ENCODE measurements at regions of chr12 and their contacts with region 1.

Region 1: GRCh38 chr12:95700316-95700785 is 90.2 kb downstream of the NTN4 start:
- DNase-seq: peak; percentile 10 to 91
- H3K4me3 ChIP-seq: no peak overlapping the region
- H3K27ac ChIP-seq: peak overlapping the region; percentile 96
- H3K4me1 ChIP-seq: peaks cover 37% of the 10 kb centered on the region
- H3K27me3 ChIP-seq: no peaks in the 10 kb centered on the region
- CTCF ChIP-seq: no peak

Region 2: GRCh38 chr12:95204141-95204866 is 496.0 kb before region 1 on chr12:
- CTCF ChIA-PET with region 1: no interaction called
- POLR2A ChIA-PET with region 1: interaction called, 10 read pairs
- intact Hi-C with region 1: no loop called
- DNase-seq: peak; percentile 91 to 98
- H3K4me3 ChIP-seq: peak overlapping the region; percentile 48
- H3K27ac ChIP-seq: peak overlapping the region; percentile 98
- H3K4me1 ChIP-seq: peaks cover 80% of the 10 kb centered on the region
- H3K27me3 ChIP-seq: no peaks in the 10 kb centered on the region
- CTCF ChIP-seq: no peak

Region 3: DNA sequence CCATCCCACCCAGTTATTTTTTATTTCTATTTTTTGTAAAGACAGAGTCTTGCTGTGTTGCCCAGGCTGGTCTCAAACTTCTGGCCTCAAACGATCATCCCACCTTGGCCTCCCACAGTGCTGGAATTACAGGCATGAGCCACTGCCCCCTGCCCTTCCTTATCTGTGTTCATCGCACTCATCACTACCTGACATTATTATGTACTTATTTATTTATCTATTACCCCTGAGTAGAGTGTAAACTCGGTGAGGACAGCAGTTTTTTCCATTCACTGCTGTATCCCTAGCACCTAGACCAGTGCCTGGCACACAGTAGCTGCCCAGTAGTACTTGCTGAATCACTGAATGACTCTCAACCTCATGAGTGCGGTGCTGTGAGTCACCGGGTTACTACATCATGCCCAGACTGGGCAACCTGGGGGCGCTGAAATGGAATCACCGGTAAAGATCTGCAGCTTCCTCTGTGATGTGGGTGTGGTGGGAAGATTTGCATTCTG is 67.3 kb before region 1 on chr12:
- CTCF ChIA-PET with region 1: no interaction called
- POLR2A ChIA-PET with region 1: no interaction called
- intact Hi-C with region 1: loop called (anchors 2 kb)
- DNase-seq: peak; percentile 76 to 96
- H3K4me3 ChIP-seq: no peak overlapping the region
- H3K27ac ChIP-seq: peak overlapping the region; percentile 99
- H3K4me1 ChIP-seq: peaks cover 38% of the 10 kb centered on the region
- H3K27me3 ChIP-seq: no peaks in the 10 kb centered on the region
- CTCF ChIP-seq: no peak

Region 4: DNA sequence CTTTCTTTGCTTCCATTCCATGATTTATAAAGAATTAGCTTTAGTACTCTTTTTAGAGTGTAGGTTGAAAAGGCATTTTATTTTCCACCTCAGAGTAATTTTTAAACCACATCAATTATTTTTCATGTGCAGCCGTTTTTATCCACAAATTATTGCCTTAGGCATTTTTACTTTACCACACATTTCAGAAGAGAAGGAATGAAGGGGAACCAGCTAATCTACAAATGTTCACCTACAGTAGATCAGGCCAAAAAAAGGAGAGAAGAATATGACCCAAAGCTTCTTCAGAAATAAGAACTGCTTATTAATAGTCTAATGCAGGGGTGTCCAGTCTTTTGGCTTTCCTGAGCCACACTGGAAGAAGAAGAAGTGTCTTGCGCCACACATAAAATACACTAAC is 110.1 kb after region 1 on chr12:
- CTCF ChIA-PET with region 1: no interaction called
- POLR2A ChIA-PET with region 1: no interaction called
- intact Hi-C with region 1: no loop called
- DNase-seq: peak in 1 of 2 experiments; percentile 84
- H3K4me3 ChIP-seq: no peak overlapping the region
- H3K27ac ChIP-seq: peak overlapping the region; percentile 100
- H3K4me1 ChIP-seq: peaks cover 70% of the 10 kb centered on the region
- H3K27me3 ChIP-seq: no peaks in the 10 kb centered on the region
- CTCF ChIP-seq: no peak

Region 5: DNA sequence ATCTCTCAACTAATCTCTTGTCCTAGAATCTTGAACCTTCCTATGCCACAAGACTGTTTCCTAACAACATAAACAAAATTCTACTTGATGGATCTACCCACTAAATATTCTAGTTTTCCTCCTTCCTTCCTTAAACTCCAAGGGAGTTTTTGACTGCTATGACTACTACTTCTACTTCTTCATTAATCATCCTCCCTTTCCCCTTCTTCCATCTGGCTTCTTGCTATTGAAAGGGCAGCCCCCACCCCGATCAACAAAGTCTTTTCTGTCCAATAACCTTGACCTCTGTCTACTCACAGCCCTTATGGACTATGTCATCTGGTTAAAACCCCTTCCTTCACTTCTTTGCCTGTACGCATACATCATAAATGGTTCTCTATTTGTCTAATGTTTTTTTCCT is 329.5 kb after region 1 on chr12:
- CTCF ChIA-PET with region 1: no interaction called
- POLR2A ChIA-PET with region 1: no interaction called
- intact Hi-C with region 1: no loop called
- DNase-seq: no peak
- H3K4me3 ChIP-seq: no peak overlapping the region
- H3K27ac ChIP-seq: no peak overlapping the region
- H3K4me1 ChIP-seq: peaks cover 32% of the 10 kb centered on the region
- H3K27me3 ChIP-seq: no peaks in the 10 kb centered on the region
- CTCF ChIP-seq: no peak

Measured in PC-9 (cell line).